ENCODE measurements at regions of chr20 and their contacts with region 1.

Region 1: GRCh38 chr20:10673988-10674711 is at the start of gene JAG1:
- DNase-seq: peak; percentile 69
- H3K4me3 Mint-ChIP-seq: peak within 1 kb of the TSS; percentile 78
- H3K27ac Mint-ChIP-seq: no peak within 1 kb of the TSS
- H3K4me1 Mint-ChIP-seq: peaks cover 21% of the 10 kb centered on the region
- H3K27me3 Mint-ChIP-seq: peaks cover 60% of the 10 kb centered on the region
- total RNA-seq, gene JAG1: 0.25 to 0.41 TPM

Region 2: GRCh38 chr20:10034717-10035571 is 639.2 kb before region 1 on chr20 and contains the start of gene ANKEF1:
- CTCF ChIA-PET with region 1: no interaction called
- intact Hi-C with region 1: loop called (anchors 10 kb)
- DNase-seq: peak; percentile 75
- H3K4me3 Mint-ChIP-seq: peak within 1 kb of the TSS; percentile 66
- H3K27ac Mint-ChIP-seq: no peak within 1 kb of the TSS
- H3K4me1 Mint-ChIP-seq: peaks cover 6% of the 10 kb centered on the region
- H3K27me3 Mint-ChIP-seq: no peaks in the 10 kb centered on the region
- total RNA-seq, gene ANKEF1: 2.8 to 3.2 TPM

Region 3: DNA sequence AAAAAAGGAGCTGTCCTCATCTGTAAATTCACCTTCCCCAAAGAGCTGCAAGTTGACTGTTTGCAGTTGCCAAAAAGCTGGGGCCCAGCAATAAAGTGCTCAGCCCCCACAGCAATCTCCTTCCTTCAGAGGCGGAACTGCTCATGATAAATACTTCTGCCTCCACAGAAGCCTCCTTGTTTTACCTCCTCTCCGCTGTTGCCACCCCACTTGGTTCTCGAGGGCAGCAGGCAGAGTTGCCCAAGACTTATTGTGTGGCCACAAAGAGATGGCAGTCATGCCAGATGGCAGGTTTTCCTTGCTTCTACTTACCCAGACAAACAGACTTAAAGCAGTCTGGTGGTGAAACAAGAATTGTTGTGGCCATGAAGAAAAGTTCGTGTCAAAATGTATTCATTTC is 172.7 kb before region 1 on chr20:
- CTCF ChIA-PET with region 1: no interaction called
- intact Hi-C with region 1: loop called (anchors 5 kb)
- DNase-seq: peak; percentile 17
- H3K4me3 Mint-ChIP-seq: peak overlapping the region; percentile 73
- H3K27ac Mint-ChIP-seq: peak overlapping the region; percentile 71
- H3K4me1 Mint-ChIP-seq: peaks cover 19% of the 10 kb centered on the region
- H3K27me3 Mint-ChIP-seq: no peaks in the 10 kb centered on the region

Region 4: GRCh38 chr20:10603971-10604864 is 69.9 kb before region 1 on chr20:
- CTCF ChIA-PET with region 1: no interaction called
- intact Hi-C with region 1: loop called (anchors 1 kb)
- DNase-seq: no peak
- H3K4me3 Mint-ChIP-seq: no peak overlapping the region
- H3K27ac Mint-ChIP-seq: no peak overlapping the region
- H3K4me1 Mint-ChIP-seq: peaks cover 4% of the 10 kb centered on the region
- H3K27me3 Mint-ChIP-seq: no peaks in the 10 kb centered on the region

Region 5: GRCh38 chr20:10868299-10868698 is 194.1 kb after region 1 on chr20:
- CTCF ChIA-PET with region 1: no interaction called
- intact Hi-C with region 1: no loop called
- DNase-seq: no peak
- H3K4me3 Mint-ChIP-seq: no peak overlapping the region
- H3K27ac Mint-ChIP-seq: no peak overlapping the region
- H3K4me1 Mint-ChIP-seq: no peaks in the 10 kb centered on the region
- H3K27me3 Mint-ChIP-seq: no peaks in the 10 kb centered on the region

Region 6: DNA sequence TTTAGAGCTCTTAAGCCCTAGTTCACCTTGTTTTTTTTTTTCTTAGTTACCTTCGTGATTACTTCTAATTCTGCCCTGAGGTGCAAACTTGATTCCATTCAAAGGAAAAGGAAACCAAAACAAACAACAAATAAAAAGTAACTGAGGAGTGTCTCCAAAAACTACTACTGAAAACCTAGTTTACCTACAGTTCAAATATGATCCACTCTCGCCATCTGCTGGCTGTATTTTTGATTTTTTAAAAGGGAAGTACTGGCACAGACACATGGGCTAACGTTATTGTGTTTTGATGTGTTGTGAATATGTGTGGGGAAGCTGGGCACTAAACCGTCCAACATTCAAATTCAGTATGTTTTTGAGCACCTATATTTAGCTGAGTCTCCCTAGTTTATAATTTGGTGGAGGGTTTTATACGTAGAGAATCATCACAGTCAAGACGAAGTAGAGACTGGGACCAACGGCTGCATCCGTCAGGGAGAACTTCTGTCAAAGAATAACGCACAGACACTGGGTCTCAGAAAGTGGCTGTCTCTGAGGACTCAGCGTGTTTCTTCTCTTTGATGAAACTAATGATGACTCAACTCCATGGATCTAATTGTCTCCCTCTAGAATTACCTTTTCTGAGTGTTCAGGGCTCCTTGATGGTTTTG is 870.0 kb after region 1 on chr20:
- CTCF ChIA-PET with region 1: no interaction called
- intact Hi-C with region 1: loop called (anchors 5 kb)
- DNase-seq: peak; percentile 35
- H3K4me3 Mint-ChIP-seq: no peak overlapping the region
- H3K27ac Mint-ChIP-seq: no peak overlapping the region
- H3K4me1 Mint-ChIP-seq: no peaks in the 10 kb centered on the region
- H3K27me3 Mint-ChIP-seq: peaks cover 4% of the 10 kb centered on the region

Measured in activated naive CD4-positive, alpha-beta T cell treated with anti-CD3 and anti-CD28 coated beads for 36 hours (primary cell).